Activated B cell treated with CpG ODN at 0.5 μM for 24 hours (primary cell): ENCODE measurements at regions of chrX and their contacts with region 1.

Region 1: GRCh38 chrX:47361538-47362511 is 8.6 kb upstream of the ZNF157 start:
- DNase-seq: peak; percentile 51
- ATAC-seq: peak; percentile 79
- H3K4me3 Mint-ChIP-seq: peak overlapping the region; percentile 87
- H3K27ac Mint-ChIP-seq: peak overlapping the region; percentile 97
- H3K4me1 Mint-ChIP-seq: peaks cover 31% of the 10 kb centered on the region
- H3K27me3 Mint-ChIP-seq: no peaks in the 10 kb centered on the region
- CTCF ChIP-seq: no peak

Region 2: GRCh38 chrX:47144626-47145394 is 217.0 kb before region 1 on chrX and contains the starts of genes NDUFB11 and RBM10:
- CTCF ChIA-PET with region 1: no interaction called
- POLR2A ChIA-PET with region 1: interaction called, 6 read pairs
- intact Hi-C with region 1: loop called (anchors 2 kb)
- DNase-seq: peak; percentile 73
- ATAC-seq: peak; percentile 90
- H3K4me3 Mint-ChIP-seq: peak within 1 kb of the TSS; percentile 96
- H3K27ac Mint-ChIP-seq: peak within 1 kb of the TSS; percentile 97
- H3K4me1 Mint-ChIP-seq: peaks cover 30% of the 10 kb centered on the region
- H3K27me3 Mint-ChIP-seq: no peaks in the 10 kb centered on the region
- CTCF ChIP-seq: no peak
- total RNA-seq, gene NDUFB11: 73.3 and 88.0 TPM in 2 replicates
- total RNA-seq, gene RBM10: 54.9 and 55.6 TPM in 2 replicates

Region 3: DNA sequence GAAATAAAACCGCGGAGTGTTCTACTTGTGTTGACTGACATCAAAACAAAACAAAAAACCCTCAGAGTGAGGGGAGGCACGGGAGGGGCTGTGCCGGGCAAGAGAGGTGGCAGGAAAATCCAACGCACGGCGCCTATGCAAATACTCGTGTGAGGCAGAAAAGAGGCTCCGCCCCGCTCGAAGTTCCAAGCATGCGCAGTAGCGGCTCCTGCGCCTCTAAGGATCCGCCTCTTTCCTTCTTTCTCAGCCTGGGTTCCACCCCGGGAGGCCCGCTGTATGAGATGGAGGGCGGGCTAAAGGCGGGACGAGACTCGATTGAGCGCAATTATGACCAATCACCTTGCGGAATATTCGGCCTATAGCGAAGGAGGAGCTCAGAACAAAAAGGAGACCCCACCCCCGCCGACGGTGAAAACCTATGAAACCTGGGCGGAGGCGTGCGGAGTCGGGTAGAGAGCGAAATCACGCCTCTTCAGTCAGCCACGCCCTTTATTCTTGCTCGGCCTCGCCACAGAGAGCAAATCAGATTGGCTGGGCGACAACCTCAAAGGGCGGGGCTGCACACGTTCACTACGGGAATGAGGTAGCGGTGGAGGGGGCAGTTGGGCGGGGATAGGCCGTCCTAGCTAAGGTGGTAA is 144.1 kb before region 1 on chrX:
- CTCF ChIA-PET with region 1: interaction called, 4 read pairs
- POLR2A ChIA-PET with region 1: interaction called, 20 read pairs
- intact Hi-C with region 1: loop called (anchors 1 kb)
- DNase-seq: peak; percentile 84
- ATAC-seq: peak; percentile 80
- H3K4me3 Mint-ChIP-seq: peak overlapping the region; percentile 92
- H3K27ac Mint-ChIP-seq: peak overlapping the region; percentile 99
- H3K4me1 Mint-ChIP-seq: peaks cover 40% of the 10 kb centered on the region
- H3K27me3 Mint-ChIP-seq: no peaks in the 10 kb centered on the region
- CTCF ChIP-seq: no peak

Region 4: DNA sequence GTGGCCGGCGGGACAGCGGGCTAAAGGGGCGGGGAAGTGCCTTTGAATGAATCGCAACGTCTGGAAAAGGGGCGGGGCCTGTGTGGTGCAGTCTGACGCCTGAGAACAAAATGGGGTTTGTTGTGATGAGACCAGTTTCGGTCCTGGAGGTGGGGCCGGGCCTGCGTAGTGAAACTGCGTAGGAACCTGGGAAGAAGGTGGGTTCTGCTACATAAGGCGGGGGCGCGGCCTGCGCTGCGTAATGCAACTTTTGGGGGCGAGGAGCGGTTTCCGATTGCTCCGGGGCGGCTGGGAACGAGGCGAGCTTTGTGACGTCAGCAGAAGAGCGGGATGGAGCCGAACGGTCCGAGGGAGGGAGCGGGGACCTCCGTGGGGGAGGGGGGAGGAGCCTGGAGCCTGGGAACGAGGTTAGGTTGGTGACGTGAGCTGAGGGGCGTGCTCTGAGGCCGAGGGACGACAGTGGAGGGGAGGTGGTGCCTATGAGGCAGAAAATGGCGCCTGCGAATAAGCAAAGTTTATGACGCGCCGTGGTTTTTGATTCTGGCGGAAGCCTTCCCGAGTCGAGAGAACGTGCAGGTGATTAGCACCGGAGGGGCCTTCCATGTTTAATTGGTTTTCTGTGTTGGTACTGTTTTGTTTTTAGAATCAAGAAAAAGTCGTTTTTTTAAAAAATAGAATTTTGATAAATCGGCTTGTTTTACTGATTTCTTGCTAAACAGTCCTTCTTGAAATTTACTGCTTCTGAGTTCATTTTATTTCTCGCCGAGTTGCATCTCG is 128.3 kb before region 1 on chrX:
- CTCF ChIA-PET with region 1: no interaction called
- POLR2A ChIA-PET with region 1: interaction called, 22 read pairs
- intact Hi-C with region 1: loop called (anchors 1 kb)
- DNase-seq: peak; percentile 74
- ATAC-seq: peak; percentile 90
- H3K4me3 Mint-ChIP-seq: peak overlapping the region; percentile 92
- H3K27ac Mint-ChIP-seq: peak overlapping the region; percentile 98
- H3K4me1 Mint-ChIP-seq: peaks cover 15% of the 10 kb centered on the region
- H3K27me3 Mint-ChIP-seq: no peaks in the 10 kb centered on the region
- CTCF ChIP-seq: no peak

Region 5: DNA sequence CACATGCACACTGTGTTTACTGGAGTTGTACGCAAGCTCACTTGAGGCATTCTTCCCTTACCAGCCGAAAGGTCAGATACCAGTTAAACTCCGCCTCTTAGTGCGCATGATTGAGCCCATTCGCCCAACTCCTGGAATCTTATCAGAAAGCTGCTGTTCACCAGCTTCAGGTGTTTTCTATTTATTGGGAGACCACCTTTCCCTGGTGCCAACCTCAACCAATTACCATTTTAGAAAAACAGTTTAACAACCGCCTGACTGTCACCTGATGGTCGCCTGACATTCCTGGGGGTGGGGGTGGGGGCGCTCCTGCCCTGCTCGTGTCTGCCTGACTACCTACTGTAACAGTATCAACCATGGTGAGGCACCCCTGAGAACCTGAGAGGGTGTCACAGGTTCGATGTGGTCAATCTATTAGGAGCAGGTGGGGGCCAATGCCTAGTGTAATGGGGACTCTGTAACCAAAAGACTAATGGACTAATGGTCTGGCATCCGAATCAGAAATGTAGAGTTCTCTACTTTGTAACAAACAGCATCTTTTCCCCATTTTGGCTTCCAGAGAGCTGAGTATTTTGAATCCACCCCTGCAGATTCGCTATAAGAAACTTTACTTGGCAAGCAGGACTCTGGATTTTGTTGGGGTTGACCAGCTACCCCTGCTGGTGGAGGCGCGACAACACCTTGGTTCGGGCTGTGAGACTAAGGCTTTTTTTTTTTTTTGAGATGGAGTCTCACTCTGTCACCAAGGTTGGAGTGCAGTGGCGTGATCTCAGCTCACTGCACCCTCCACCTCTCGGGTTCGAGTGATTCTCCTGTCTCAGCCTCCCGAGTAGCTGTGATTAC is 49.7 kb before region 1 on chrX:
- CTCF ChIA-PET with region 1: no interaction called
- POLR2A ChIA-PET with region 1: no interaction called
- intact Hi-C with region 1: loop called (anchors 10 kb)
- DNase-seq: no peak
- ATAC-seq: peak; percentile 28
- H3K4me3 Mint-ChIP-seq: no peak overlapping the region
- H3K27ac Mint-ChIP-seq: no peak overlapping the region
- H3K4me1 Mint-ChIP-seq: no peaks in the 10 kb centered on the region
- H3K27me3 Mint-ChIP-seq: no peaks in the 10 kb centered on the region
- CTCF ChIP-seq: no peak

Region 6: DNA sequence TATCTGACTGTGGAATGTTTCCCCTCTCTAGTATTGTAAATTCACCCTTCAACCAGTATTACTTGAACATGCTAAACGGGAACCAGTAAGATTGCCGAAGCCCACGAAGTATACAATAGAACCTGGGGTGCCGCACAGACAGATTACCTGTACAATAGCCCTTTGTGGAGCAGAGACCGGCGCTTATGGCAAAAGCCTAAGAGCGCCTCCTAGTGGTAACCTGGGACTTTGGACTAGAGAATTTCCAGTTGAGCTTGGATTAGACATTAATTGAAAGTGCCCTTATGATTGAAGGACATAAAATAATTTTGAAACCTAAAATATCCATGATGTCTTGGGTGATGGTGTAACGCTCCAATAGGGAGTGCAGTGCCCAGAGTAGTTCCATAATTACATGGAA is 22.7 kb after region 1 on chrX:
- CTCF ChIA-PET with region 1: interaction called, 8 read pairs
- POLR2A ChIA-PET with region 1: no interaction called
- intact Hi-C with region 1: loop called (anchors 1 kb)
- DNase-seq: no peak
- ATAC-seq: peak; percentile 72
- H3K4me3 Mint-ChIP-seq: no peak overlapping the region
- H3K27ac Mint-ChIP-seq: no peak overlapping the region
- H3K4me1 Mint-ChIP-seq: peaks cover 7% of the 10 kb centered on the region
- H3K27me3 Mint-ChIP-seq: no peaks in the 10 kb centered on the region
- CTCF ChIP-seq: peak; percentile 33

Region 7: GRCh38 chrX:47482512-47483309 is 120.9 kb after region 1 on chrX and contains the start of gene ZNF41:
- CTCF ChIA-PET with region 1: no interaction called
- POLR2A ChIA-PET with region 1: no interaction called
- intact Hi-C with region 1: loop called (anchors 2 kb)
- DNase-seq: peak; percentile 63
- ATAC-seq: peak; percentile 78
- H3K4me3 Mint-ChIP-seq: peak within 1 kb of the TSS; percentile 90
- H3K27ac Mint-ChIP-seq: peak within 1 kb of the TSS; percentile 92
- H3K4me1 Mint-ChIP-seq: peaks cover 42% of the 10 kb centered on the region
- H3K27me3 Mint-ChIP-seq: no peaks in the 10 kb centered on the region
- CTCF ChIP-seq: no peak
- total RNA-seq, gene ZNF41: 15.4 and 19.2 TPM in 2 replicates

Region 8: GRCh38 chrX:48696301-48697181 is 1334.7 kb after region 1 on chrX and contains the start of gene SUV39H1:
- CTCF ChIA-PET with region 1: no interaction called
- POLR2A ChIA-PET with region 1: no interaction called
- intact Hi-C with region 1: no loop called
- DNase-seq: peak; percentile 70
- ATAC-seq: peak; percentile 96
- H3K4me3 Mint-ChIP-seq: peak within 1 kb of the TSS; percentile 88
- H3K27ac Mint-ChIP-seq: peak within 1 kb of the TSS; percentile 91
- H3K4me1 Mint-ChIP-seq: peaks cover 19% of the 10 kb centered on the region
- H3K27me3 Mint-ChIP-seq: no peaks in the 10 kb centered on the region
- CTCF ChIP-seq: no peak
- total RNA-seq, gene SUV39H1: 9.1 and 10.8 TPM in 2 replicates